ENCODE measurements at regions of chr6 and their contacts with region 1.

Region 1: GRCh38 chr6:46893648-46894047 is 28.1 kb downstream of the ADGRF5 start:
- DNase-seq: no peak
- H3K4me3 ChIP-seq: no peak overlapping the region
- H3K27ac ChIP-seq: no peak overlapping the region
- H3K4me1 ChIP-seq: no peaks in the 10 kb centered on the region
- H3K27me3 ChIP-seq: no peaks in the 10 kb centered on the region
- CTCF ChIP-seq: no peak
- EP300 ChIP-seq: no peak
- POLR2A ChIP-seq: no peak

Region 2: DNA sequence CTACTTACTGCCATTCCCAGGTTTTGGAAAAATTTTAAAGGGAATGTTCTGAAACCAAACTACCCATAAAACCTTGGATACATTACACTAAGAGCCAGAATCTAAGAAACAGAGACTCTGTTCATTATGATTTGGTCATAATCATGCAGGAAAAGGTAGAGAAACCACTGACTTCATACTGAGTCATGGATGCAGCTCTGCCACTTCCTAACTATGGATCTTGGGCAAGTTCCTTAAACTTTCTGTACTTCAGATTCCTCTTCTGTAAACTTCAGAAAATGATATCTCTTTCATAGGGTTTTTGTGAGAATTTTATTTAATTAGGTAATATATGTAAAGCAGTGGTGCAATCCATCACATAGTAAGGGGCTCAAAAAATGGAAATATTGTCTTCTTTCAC is 178.5 kb before region 1 on chr6:
- intact Hi-C with region 1: no loop called
- DNase-seq: no peak
- H3K4me3 ChIP-seq: no peak overlapping the region
- H3K27ac ChIP-seq: no peak overlapping the region
- H3K4me1 ChIP-seq: no peaks in the 10 kb centered on the region
- H3K27me3 ChIP-seq: no peaks in the 10 kb centered on the region
- CTCF ChIP-seq: no peak
- EP300 ChIP-seq: no peak
- POLR2A ChIP-seq: no peak

Region 3: GRCh38 chr6:47792216-47792733 is 898.6 kb after region 1 on chr6:
- intact Hi-C with region 1: loop called in 1 of 4 experiments (anchors 10 kb)
- DNase-seq: no peak
- H3K4me3 ChIP-seq: no peak overlapping the region
- H3K27ac ChIP-seq: no peak overlapping the region
- H3K4me1 ChIP-seq: peaks cover 5% of the 10 kb centered on the region
- H3K27me3 ChIP-seq: no peaks in the 10 kb centered on the region
- CTCF ChIP-seq: no peak
- EP300 ChIP-seq: no peak
- POLR2A ChIP-seq: no peak